ENCODE measurements at regions of chr5 and their contacts with region 1.

Region 1: DNA sequence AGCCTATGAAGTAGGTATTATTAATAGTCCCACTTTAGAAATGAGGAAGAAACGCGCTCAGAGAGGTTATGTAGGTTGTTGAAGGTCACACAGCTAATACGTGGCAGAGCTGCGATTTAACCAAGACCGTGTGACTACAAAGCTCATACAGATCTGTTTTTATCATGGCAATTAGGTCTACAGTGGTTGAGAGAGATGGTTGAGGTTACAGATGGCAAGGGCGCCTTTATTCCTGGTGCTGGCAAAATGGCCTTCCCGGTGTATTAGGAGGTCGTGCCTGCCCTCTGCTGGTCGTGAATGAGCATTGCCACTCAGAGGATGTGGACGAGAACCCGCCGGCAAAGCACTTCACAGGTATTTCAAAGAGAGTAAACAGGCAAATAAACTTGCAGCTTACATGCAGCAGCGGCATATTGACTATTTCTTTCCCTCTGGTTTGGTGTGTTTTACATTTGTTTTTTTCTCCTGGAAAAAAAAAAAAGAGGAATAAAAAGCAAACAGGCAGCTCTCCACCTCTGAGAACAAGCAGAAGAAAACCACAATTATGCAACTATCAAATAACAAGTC is 65.3 kb upstream of the EGFLAM start:
- DNase-seq: peak; percentile 64
- ATAC-seq: peak; percentile 63 to 74

Region 2: DNA sequence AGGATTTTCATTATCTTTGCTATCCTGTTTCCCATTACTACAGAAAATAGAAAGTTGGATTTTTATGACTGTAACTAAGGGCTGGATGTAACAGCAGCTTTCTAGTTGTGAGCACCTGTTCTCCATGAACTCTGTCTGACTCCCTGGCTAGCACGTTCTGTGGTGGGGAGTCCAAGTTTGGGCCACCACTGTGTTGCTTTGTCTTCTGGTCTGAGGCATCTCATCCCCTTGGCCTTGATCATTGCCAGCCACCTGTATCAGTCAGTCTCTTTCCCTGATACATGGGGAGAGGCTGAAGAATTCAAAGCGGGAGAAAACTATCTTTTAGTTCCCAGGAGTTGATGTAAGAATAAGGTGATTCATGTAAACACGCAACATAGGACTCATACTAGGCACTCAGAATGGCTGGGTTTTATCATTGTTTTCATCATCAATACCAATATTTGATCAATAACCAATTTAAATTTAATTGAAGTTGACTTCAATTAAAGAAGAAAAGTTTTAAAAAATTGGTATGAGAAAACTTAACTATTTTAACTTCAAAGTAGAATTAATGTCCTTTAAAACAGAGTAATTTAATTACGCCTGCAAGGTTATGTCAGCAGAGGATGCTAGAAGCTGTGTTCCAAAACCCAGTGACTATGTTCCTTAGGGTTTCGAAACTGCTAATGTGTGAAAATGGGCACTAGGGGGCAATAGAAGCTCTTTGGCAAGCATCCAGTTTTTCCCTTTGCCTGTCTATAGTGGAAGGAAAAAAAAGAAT is 780.4 kb before region 1 on chr5:
- intact Hi-C with region 1: loop called in 1 of 2 experiments (anchors 10 kb)
- DNase-seq: no peak
- ATAC-seq: peak; percentile 72 to 81

Region 3: DNA sequence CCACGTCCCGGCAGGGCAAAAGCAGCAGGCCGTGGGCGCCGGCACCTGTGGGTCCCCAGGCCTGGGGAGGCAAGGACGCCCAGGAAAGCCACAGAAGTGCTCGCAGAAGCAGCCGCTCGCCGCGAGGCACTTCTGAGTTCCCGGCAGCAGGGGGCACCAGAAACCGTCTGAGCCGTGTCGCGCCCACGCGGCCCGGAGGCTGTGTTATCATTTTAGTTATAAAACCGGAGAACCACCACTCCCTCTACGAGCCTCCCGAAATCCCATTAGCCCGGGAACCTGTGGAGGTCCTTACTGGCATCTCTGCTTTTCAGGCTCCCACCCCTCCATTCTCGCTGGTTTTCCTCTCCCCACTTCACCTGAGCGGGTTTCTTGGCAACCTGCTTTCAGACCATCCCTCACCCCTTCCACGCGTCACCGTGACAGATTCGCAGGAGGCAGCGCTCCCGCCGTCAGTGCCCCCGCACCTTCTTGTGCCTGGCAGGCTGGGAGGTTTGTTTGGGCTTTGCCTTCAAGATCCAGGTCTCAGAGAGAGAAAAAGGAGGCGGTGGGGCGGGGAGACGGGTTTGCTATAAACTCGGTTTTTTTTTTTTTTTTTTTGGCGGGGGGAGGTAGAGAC is 355.6 kb before region 1 on chr5:
- intact Hi-C with region 1: loop called (anchors 1 to 5 kb)
- DNase-seq: peak; percentile 82
- ATAC-seq: peak; percentile 78 to 80

Region 4: DNA sequence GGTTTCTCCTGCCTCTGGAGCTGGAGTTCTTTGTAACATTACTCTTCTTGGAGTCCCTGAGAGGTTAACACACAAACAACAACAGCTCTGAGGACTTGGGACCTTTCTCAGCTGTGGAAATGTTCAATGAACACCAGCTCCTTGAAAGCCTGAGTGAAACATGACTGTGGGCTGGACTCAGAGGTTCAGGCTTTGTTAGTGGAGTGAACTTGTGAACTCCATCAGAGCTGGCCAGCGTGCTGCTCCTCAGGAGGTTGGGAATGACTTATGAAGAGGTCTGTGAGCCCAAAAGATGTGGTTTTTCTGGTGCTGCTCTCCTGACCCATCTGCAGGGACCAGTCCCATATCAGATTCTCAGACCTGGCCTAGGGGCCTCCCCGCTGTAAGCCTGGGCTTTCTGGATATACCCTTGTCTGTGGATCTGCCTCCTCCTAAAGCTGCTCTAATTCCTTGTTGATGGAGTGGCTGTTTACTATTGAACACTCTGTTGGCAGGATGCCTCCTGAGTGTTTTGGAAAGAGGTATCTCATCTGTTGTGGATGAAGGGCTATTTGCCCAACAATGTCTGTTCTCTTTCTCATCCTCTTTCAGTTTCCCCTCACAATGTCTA is 183.2 kb before region 1 on chr5:
- intact Hi-C with region 1: loop called in 1 of 2 experiments (anchors 10 kb)
- DNase-seq: no peak
- ATAC-seq: no peak

Region 5: GRCh38 chr5:38734353-38734752 is 541.3 kb after region 1 on chr5:
- intact Hi-C with region 1: no loop called
- DNase-seq: no peak
- ATAC-seq: no peak